ENCODE measurements at regions of chr6 and their contacts with region 1.

Region 1: GRCh38 chr6:129683601-129684322 is 26.2 kb downstream of the ARHGAP18 start:
- DNase-seq: peak; percentile 98
- H3K4me3 ChIP-seq: no peak overlapping the region
- H3K27ac ChIP-seq: peak overlapping the region; percentile 89
- H3K27me3 ChIP-seq: no peaks in the 10 kb centered on the region
- CTCF ChIP-seq: no peak

Region 2: DNA sequence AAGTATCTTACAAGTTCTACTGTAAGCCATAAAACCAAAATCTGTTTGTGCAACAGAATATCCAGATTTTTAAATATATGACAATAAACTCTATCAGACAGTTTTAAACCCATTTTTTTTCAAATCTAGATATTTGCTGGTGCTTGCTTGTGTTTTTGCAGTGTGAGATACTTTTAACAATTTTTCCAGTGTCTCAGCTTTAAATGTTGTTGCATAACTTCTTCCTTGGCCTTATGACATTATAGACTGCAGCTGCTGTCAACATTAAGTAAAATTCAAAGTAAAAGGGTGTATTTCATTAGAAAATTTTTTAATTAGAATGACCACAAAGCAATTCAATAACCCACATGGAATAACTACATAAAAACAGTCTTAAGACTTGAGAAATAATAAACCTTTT is 1302.9 kb before region 1 on chr6:
- CTCF ChIA-PET with region 1: no interaction called
- POLR2A ChIA-PET with region 1: no interaction called
- DNase-seq: no peak
- H3K4me3 ChIP-seq: no peak overlapping the region
- H3K27ac ChIP-seq: no peak overlapping the region
- H3K27me3 ChIP-seq: no peaks in the 10 kb centered on the region
- CTCF ChIP-seq: no peak

Region 3: GRCh38 chr6:129635396-129636130 is 48.2 kb before region 1 on chr6:
- CTCF ChIA-PET with region 1: no interaction called
- POLR2A ChIA-PET with region 1: no interaction called
- DNase-seq: no peak
- H3K4me3 ChIP-seq: no peak overlapping the region
- H3K27ac ChIP-seq: no peak overlapping the region
- H3K27me3 ChIP-seq: no peaks in the 10 kb centered on the region
- CTCF ChIP-seq: no peak

Region 4: GRCh38 chr6:129659590-129660345 is 24.0 kb before region 1 on chr6:
- CTCF ChIA-PET with region 1: no interaction called
- POLR2A ChIA-PET with region 1: no interaction called
- DNase-seq: no peak
- H3K4me3 ChIP-seq: no peak overlapping the region
- H3K27ac ChIP-seq: no peak overlapping the region
- H3K27me3 ChIP-seq: no peaks in the 10 kb centered on the region
- CTCF ChIP-seq: no peak

Region 5: DNA sequence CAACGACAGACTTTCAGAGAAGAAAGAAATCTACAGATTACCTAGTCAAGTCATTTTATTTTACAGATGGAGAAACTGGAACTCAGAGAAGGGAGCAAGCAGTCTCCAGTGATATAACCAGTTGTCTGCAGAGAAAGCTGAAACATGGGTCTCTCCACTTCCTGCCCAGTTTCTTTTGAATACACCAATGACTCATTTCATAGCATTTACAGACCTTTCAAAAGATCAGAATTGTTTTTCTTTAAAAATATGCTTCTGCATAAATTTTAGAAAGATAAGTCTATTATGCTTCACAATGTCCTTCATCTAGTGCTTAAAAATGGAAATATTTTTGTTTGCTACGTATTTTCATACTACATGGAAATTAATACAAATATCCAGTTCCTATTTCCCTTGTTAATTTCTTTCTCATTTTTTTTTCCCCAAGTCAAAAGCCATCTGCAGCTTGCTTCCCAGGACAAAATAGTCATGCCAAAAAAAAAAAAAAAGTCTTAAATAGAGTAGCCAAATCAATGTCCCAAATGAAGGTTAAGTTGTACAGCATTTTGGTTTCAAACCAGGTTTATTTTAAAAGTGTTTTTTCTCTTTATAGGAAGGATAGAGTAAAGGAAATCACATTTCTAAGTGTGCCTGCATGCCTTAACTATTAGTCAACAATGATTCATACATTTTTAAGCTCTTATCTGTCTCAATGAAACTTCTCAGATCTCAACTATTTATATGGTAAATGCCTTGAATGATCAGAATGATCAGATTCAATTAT is 10.7 kb before region 1 on chr6:
- CTCF ChIA-PET with region 1: interaction called, 4 read pairs
- POLR2A ChIA-PET with region 1: interaction called, 13 read pairs
- DNase-seq: peak; percentile 42
- H3K4me3 ChIP-seq: 0 out of 2 replicates have a peak overlapping the region, but pooled peaks have one; percentile 2
- H3K27ac ChIP-seq: peak overlapping the region; percentile 63
- H3K27me3 ChIP-seq: no peaks in the 10 kb centered on the region
- CTCF ChIP-seq: no peak

Region 6: GRCh38 chr6:129709769-129710449 is 26.1 kb after region 1 on chr6 and contains the start of gene ARHGAP18:
- CTCF ChIA-PET with region 1: interaction called, 3 read pairs
- POLR2A ChIA-PET with region 1: interaction called, 16 read pairs
- DNase-seq: peak; percentile 71
- H3K4me3 ChIP-seq: peak within 1 kb of the TSS; percentile 80
- H3K27ac ChIP-seq: peak within 1 kb of the TSS; percentile 63
- H3K27me3 ChIP-seq: no peaks in the 10 kb centered on the region
- CTCF ChIP-seq: no peak
- polyA plus RNA-seq, gene ARHGAP18: 11.0 and 13.9 TPM in 2 replicates

Region 7: GRCh38 chr6:129801909-129802308 is 118.1 kb after region 1 on chr6:
- CTCF ChIA-PET with region 1: no interaction called
- POLR2A ChIA-PET with region 1: no interaction called
- DNase-seq: no peak
- H3K4me3 ChIP-seq: no peak overlapping the region
- H3K27ac ChIP-seq: no peak overlapping the region
- H3K27me3 ChIP-seq: no peaks in the 10 kb centered on the region
- CTCF ChIP-seq: no peak